ENCODE measurements at regions of chr14 and their contacts with region 1.

Region 1: DNA sequence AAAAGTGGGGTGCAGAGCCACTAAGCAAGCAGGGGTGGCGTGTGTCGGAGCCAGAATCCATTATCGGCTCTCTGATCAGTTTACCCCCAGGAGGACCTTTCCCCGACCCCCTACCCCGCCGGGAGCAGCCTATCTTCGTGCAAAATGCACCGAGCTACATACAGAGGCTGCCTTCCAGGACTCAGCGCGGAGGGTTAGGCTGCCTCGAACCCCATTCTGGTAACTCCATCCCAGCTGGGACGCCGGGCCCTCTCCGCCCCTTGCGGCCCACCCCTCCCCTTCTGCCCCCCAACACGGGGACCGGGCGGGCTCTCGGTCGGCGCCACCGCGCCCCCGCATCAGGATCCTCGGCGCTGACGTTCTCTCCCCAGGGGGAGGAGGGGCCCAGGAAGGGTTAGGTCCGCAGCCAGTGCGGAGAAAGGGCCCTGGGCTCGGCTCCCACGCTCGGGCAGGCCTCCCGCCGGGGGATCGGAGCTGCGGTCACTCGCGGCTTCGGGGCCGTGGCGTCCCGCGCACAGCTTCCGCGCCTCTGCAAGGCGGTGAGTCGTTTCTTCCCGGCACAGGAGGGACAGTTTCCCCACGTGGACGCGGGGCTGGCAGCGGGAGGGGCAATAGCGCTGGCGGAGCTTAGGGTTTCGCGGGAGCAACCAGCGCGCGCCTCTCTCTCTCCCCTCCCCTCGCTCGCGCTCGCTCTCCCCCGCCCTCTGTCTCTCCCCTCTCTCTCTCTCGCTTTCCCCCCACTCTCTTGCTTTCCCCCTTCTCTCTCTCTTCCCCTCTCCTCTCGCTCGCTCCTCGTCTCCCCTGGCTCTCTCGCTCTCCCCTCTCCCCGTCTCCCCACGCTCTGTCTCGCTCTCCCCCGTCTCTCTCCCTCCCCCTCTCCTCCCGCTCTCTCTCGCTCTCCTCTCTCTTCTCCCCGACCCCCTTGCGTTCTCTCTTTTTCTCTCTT is 12.5 kb upstream of the MAP3K9 start:
- DNase-seq: peak; percentile 88
- H3K4me3 Mint-ChIP-seq: peak overlapping the region; percentile 89
- H3K27ac Mint-ChIP-seq: peak overlapping the region; percentile 81
- H3K4me1 Mint-ChIP-seq: peaks cover 25% of the 10 kb centered on the region
- H3K27me3 Mint-ChIP-seq: peaks cover 19% of the 10 kb centered on the region

Region 2: DNA sequence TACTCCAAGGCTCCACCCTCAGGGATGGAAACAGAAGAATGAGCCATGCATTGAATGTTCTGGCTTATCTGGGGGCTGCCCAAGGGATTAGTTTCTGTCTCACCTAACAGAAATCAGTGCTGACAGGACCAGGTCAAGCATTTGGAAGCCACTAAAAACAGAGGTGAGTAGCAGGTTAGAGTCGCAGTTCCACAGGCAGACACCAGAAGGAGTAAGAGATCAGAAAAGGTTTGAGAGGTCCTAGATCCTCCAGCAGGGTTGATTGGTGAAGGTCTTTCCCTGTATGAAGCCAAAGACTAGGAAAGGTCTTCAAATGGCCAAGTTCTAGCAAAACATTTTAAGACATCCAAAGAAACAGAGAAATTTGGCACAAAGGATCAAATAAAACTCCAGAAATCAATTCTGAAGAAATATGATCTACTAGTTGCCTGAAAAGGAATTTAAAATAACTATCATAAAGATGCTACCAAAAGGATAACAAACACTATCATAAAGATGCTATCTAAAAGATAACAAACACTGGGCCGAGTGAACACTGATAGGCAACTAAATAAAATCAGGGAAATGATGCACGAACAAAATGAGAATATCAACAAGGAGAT is 199.6 kb before region 1 on chr14:
- intact Hi-C with region 1: loop called (anchors 1 kb)
- DNase-seq: peak; percentile 89
- H3K4me3 Mint-ChIP-seq: no peak overlapping the region
- H3K27ac Mint-ChIP-seq: no peak overlapping the region
- H3K4me1 Mint-ChIP-seq: no peaks in the 10 kb centered on the region
- H3K27me3 Mint-ChIP-seq: peaks cover 16% of the 10 kb centered on the region

Region 3: GRCh38 chr14:70809543-70810244 is 12.2 kb before region 1 on chr14:
- intact Hi-C with region 1: loop called (anchors 1 kb)
- DNase-seq: peak; percentile 96
- H3K4me3 Mint-ChIP-seq: no peak overlapping the region
- H3K27ac Mint-ChIP-seq: peak overlapping the region; percentile 79
- H3K4me1 Mint-ChIP-seq: peaks cover 7% of the 10 kb centered on the region
- H3K27me3 Mint-ChIP-seq: peaks cover 4% of the 10 kb centered on the region

Region 4: DNA sequence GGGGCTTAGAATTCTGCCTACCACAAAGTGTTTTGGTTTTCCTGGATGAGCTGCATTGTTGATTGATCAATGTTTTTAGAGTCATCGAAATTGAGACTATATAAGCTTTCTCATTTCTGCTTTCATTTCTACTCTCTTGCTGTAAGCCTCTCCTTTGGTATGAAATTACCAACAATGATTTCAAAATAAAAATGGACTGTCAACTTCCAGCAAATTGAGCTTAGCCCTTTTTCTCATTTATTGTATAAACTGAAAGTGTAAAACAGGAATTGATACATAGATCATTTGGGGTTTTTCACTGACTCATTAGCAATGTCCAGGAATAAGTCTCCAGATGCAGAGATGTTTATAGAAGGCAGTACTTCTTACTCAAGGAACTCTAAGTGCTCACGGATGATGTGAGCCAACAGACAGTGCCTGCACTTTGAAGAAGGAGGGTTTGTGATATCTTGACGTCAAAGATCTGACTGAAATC is 65.4 kb after region 1 on chr14:
- intact Hi-C with region 1: loop called (anchors 2 kb)
- DNase-seq: no peak
- H3K4me3 Mint-ChIP-seq: peak overlapping the region; percentile 76
- H3K27ac Mint-ChIP-seq: peak overlapping the region; percentile 93
- H3K4me1 Mint-ChIP-seq: peaks cover 80% of the 10 kb centered on the region
- H3K27me3 Mint-ChIP-seq: no peaks in the 10 kb centered on the region

Region 5: DNA sequence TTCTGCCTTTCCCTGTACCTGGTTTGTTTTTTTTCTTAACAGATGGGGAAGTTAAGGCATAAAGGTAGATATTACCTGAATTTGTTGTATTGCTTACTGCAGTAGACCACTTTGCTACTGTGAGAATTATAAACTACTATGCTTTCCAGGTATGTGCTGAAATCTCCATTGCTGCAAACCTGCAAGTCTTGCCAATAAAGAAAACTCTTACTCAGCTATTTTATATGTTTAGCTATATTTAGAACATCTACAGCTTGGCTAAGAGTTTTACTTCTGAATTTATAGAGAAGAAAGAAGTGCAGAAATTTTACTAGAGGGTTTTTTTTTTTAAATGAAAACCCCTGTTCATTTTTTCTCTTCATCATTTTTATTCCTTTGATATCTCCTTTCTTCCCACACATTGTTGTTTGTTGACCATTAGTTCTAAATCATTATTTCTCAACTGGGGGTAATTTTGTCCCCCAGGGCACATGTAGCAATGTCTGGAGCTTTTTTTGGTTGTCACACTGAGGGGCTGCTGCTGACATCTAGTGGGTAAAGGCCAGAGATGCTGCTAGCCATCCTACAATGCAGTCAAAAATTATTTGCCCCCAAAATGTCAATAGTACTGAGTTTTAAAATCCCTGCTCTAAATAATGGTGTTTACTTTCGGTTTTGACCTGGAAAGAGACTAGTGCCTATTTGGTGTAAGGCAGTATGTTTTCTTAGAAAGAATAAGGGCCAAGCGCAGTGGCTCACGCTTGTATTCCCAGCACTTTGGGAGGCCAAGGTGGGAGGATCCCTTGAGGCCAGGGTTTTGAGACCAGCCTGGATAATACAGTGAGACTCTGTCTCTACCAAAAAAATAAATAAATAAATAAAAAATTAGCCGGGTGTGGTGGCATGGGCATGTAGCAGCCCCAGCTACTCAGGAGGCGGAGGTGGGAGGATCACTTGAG is 134.0 kb after region 1 on chr14:
- intact Hi-C with region 1: loop called (anchors 1 kb)
- DNase-seq: peak; percentile 81
- H3K4me3 Mint-ChIP-seq: no peak overlapping the region
- H3K27ac Mint-ChIP-seq: no peak overlapping the region
- H3K4me1 Mint-ChIP-seq: peaks cover 24% of the 10 kb centered on the region
- H3K27me3 Mint-ChIP-seq: no peaks in the 10 kb centered on the region

Region 6: GRCh38 chr14:70972107-70972976 is 150.5 kb after region 1 on chr14:
- intact Hi-C with region 1: loop called (anchors 1 kb)
- DNase-seq: peak; percentile 94
- H3K4me3 Mint-ChIP-seq: no peak overlapping the region
- H3K27ac Mint-ChIP-seq: peak overlapping the region; percentile 17
- H3K4me1 Mint-ChIP-seq: peaks cover 18% of the 10 kb centered on the region
- H3K27me3 Mint-ChIP-seq: no peaks in the 10 kb centered on the region